ENCODE measurements at regions of chr5 and their contacts with region 1.

Region 1: GRCh38 chr5:34474573-34475021 is 181.5 kb upstream of the RAI14 start:
- DNase-seq: peak; percentile 37
- ATAC-seq: peak; percentile 53
- H3K4me3 Mint-ChIP-seq: no peak overlapping the region
- H3K27ac Mint-ChIP-seq: no peak overlapping the region
- H3K4me1 Mint-ChIP-seq: peaks cover 1% of the 10 kb centered on the region
- H3K27me3 Mint-ChIP-seq: no peaks in the 10 kb centered on the region

Region 2: DNA sequence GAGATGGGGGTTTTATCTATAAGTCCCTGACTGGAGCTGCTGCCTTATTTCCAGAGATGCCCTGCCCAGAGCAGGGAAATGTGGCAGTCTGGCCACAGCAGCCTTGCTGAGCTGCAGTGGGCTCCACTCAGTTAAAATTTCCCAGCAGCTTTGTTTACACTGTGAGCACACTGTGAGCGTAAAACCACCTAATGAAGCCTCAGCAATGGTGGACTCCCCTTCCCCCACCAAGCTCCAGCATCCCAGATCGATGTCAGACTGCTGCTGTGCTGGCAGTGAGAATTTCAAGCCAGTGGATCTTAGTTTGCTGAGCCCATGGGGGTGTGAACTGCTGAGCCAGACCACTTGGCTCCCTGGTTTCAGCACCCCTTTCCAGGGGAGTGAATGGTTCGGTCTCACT is 27.2 kb before region 1 on chr5:
- CTCF ChIA-PET with region 1: no interaction called
- POLR2A ChIA-PET with region 1: no interaction called
- DNase-seq: no peak
- ATAC-seq: no peak
- H3K4me3 Mint-ChIP-seq: no peak overlapping the region
- H3K27ac Mint-ChIP-seq: no peak overlapping the region
- H3K4me1 Mint-ChIP-seq: no peaks in the 10 kb centered on the region
- H3K27me3 Mint-ChIP-seq: peaks cover 4% of the 10 kb centered on the region

Region 3: DNA sequence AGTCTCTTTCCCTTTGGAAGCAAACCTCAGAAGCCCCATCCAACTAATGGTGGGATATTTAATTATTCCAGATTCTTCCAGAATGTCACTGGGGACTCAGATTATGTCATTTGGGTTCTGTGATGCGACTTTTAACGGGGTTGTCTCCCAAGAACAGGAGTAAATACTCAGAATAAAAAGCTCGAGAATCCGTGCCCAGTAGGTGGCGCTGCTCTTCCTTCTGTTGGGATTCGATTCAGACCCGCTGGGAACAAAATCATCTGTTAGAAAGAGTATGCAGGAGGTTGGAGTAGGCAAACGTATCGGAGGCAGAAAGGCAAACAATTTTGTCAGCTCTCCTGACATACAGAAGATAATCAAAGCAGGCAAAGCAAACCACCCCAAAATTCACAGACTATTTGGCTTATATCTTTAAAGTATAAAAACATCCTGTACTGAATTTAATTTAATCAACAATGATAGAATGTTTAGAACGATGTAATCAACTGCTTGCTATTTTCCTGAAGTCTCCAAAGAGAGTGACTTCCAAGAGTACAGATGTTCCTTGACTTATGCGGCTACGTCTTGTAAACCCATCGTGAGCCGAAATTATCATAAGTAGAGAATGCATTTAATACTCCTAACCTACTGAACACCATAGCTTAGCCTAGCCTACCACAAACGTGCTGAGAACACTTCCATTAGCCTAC is 11.7 kb after region 1 on chr5:
- CTCF ChIA-PET with region 1: interaction called, 21 read pairs
- POLR2A ChIA-PET with region 1: no interaction called
- DNase-seq: peak; percentile 72
- ATAC-seq: peak; percentile 53
- H3K4me3 Mint-ChIP-seq: no peak overlapping the region
- H3K27ac Mint-ChIP-seq: no peak overlapping the region
- H3K4me1 Mint-ChIP-seq: no peaks in the 10 kb centered on the region
- H3K27me3 Mint-ChIP-seq: peaks cover 21% of the 10 kb centered on the region

Region 4: DNA sequence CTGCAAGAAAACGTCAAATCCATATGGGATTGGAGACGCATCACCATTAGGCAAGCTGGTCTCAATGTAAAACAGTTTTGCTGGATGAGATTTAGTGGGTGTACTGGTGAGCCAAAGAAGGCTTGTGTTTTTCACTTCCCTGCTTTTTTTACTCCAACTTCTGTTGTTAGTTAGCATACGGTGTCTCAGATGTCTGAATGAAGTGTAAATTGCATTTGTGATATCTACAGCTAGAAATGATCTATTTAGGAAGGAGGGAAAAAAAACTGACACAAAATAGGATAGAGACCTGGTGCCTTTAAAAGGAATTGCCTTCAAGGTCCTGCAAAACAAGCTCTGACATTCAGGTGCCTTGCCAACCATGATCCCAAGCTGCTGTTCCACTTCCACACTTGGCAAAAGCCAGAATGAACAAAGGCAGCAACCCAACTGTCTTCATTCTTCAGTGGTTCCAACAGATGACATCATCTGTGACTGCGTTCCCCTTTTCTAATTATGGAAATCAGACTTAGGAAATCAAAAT is 77.4 kb after region 1 on chr5:
- CTCF ChIA-PET with region 1: no interaction called
- POLR2A ChIA-PET with region 1: no interaction called
- DNase-seq: no peak
- ATAC-seq: no peak
- H3K4me3 Mint-ChIP-seq: no peak overlapping the region
- H3K27ac Mint-ChIP-seq: no peak overlapping the region
- H3K4me1 Mint-ChIP-seq: no peaks in the 10 kb centered on the region
- H3K27me3 Mint-ChIP-seq: peaks cover 3% of the 10 kb centered on the region